ENCODE measurements at regions of chr20 and their contacts with region 1.

Region 1: DNA sequence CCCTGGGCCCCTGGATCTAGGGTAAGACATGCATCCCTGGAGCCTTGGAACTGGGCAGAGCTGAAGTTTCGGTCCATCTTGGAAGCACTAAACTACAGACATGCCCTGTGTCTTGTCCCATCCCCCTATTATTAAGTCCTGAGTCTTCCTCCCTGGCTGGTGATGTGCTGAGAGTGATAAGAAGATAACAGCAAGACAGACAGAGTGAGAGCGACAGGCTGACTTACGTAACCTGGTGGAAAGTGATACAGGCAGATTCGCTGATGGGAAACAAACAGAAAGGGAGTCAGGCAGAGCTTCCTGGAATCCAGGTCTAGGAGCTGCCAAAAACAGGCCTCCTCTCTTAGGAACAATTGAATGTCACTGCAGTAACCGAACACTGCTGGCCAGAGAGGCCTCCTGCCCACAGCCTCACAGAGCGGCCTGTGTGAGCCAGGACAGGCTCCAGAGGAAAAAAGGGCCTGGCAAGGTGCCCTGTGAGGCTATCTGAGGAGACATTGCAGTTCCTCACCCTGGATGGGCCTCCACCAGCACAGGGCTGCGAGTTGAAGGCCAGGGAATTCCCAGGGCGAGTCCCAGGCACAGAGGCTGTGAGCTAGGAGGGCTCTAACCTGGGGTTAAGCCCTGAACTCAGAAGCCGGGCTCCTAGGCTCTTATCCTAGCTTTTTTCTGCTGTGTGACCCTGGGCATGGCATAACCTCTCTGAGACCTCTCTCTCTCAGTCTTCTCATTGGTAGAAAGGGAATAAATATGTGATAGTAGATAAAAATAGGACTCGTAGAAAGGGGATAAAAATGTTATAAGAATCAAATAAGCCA is 34.2 kb upstream of the B4GALT5 start:
- DNase-seq: peak; percentile 89 to 93
- ATAC-seq: peak; percentile 92 to 99 (median 98)
- H3K4me3 ChIP-seq: no peak overlapping the region
- H3K27ac ChIP-seq: peak overlapping the region; percentile 55 to 92 (median 84)
- H3K4me1 ChIP-seq: peaks cover 3 to 40% (median 21%) of the 10 kb centered on the region in 9 donors
- H3K27me3 ChIP-seq: no peaks in the 10 kb centered on the region
- CTCF ChIP-seq: no peak

Region 2: DNA sequence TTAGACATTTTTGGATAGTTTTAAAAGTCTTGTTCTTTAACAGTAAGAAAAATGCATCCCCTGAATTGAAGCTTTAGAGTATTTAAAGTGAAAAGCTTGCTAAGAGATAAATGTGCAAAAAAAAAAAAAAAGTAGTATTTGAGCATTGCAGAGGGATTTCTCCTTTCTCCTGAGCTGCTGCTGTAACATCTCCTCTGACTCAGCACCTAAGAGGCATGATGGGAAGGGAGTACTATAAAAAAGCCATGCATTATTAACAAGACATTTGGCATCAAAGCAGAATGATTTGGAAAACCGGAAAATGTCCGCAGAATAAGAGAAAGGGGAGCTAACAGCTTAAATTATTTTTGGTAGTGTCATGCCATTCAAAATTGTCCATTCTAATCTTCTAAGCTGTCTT is 62.1 kb before region 1 on chr20:
- intact Hi-C with region 1: loop called in 1 of 10 experiments (anchors 2 kb)
- DNase-seq: no peak
- ATAC-seq: peak in 4 of 8 donors; percentile 42 to 62 (median 50)
- H3K4me3 ChIP-seq: no peak overlapping the region
- H3K27ac ChIP-seq: peak overlapping the region in 6 of 10 donors; percentile 12 to 76 (median 16)
- H3K4me1 ChIP-seq: peaks cover 14 to 92% (median 41%) of the 10 kb centered on the region in 9 donors
- H3K27me3 ChIP-seq: no peaks in the 10 kb centered on the region
- CTCF ChIP-seq: no peak

Region 3: DNA sequence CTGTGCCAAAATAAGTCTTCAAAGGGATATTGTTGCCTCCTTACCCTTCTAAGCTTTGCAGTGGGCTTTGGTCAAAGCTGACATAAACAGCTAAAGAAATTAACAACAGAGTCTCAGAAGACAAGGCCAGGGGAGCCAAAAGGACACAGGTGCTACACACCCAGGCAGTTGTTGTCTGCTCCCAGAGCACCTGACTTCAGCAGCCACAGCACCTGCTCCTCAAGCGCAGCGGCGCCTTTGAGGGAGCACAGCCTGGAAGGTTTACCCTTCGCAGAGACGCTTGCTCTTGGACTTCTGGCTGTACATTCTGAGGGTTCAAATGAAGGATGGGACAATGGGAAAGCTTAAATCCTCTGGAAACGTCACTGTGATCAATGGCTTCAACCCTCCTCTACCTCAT is 50.8 kb before region 1 on chr20:
- intact Hi-C with region 1: no loop called
- DNase-seq: no peak
- ATAC-seq: peak in 1 of 8 donors; percentile 22
- H3K4me3 ChIP-seq: no peak overlapping the region
- H3K27ac ChIP-seq: peak overlapping the region in 1 of 10 donors; percentile 4
- H3K4me1 ChIP-seq: peaks cover 0 to 98% (median 69%) of the 10 kb centered on the region in 9 donors
- H3K27me3 ChIP-seq: no peaks in the 10 kb centered on the region
- CTCF ChIP-seq: no peak

Region 4: GRCh38 chr20:49909499-49910339 is 161.8 kb after region 1 on chr20:
- intact Hi-C with region 1: no loop called
- DNase-seq: peak; percentile 29 to 40
- ATAC-seq: peak; percentile 47 to 89 (median 73)
- H3K4me3 ChIP-seq: peak overlapping the region in 1 of 10 donors; percentile 1
- H3K27ac ChIP-seq: peak overlapping the region; percentile 53 to 86 (median 82)
- H3K4me1 ChIP-seq: peaks cover 12 to 89% (median 62%) of the 10 kb centered on the region in 9 donors
- H3K27me3 ChIP-seq: no peaks in the 10 kb centered on the region
- CTCF ChIP-seq: peak; percentile 9 to 63 (median 49)